Activated T-helper 2 cell treated with anti-CD3 and anti-CD28 coated beads, Interferon-gamma antibody, Interleukin-2, Interleukin-4, amounts not matched to agents 10 μg/mL and 5 μg/mL and 100 μg/mL, durations not matched to agents 14 hours and 24 hours and 36 hours (primary cell): ENCODE measurements at regions of chr6 and their contacts with region 1.

Region 1: GRCh38 chr6:32971581-32972352 is 3.4 kb downstream of the BRD2 start:
- DNase-seq: peak; percentile 99
- H3K4me3 Mint-ChIP-seq: peak overlapping the region; percentile 94
- H3K27ac Mint-ChIP-seq: peak overlapping the region; percentile 98
- H3K4me1 Mint-ChIP-seq: peaks cover 28% of the 10 kb centered on the region
- H3K27me3 Mint-ChIP-seq: no peaks in the 10 kb centered on the region

Region 2: GRCh38 chr6:32195652-32195901 is 776.2 kb before region 1 on chr6:
- intact Hi-C with region 1: loop called (anchors 2 kb)
- DNase-seq: peak; percentile 100
- H3K4me3 Mint-ChIP-seq: peak overlapping the region; percentile 98
- H3K27ac Mint-ChIP-seq: peak overlapping the region; percentile 99
- H3K4me1 Mint-ChIP-seq: peaks cover 33% of the 10 kb centered on the region
- H3K27me3 Mint-ChIP-seq: no peaks in the 10 kb centered on the region

Region 3: DNA sequence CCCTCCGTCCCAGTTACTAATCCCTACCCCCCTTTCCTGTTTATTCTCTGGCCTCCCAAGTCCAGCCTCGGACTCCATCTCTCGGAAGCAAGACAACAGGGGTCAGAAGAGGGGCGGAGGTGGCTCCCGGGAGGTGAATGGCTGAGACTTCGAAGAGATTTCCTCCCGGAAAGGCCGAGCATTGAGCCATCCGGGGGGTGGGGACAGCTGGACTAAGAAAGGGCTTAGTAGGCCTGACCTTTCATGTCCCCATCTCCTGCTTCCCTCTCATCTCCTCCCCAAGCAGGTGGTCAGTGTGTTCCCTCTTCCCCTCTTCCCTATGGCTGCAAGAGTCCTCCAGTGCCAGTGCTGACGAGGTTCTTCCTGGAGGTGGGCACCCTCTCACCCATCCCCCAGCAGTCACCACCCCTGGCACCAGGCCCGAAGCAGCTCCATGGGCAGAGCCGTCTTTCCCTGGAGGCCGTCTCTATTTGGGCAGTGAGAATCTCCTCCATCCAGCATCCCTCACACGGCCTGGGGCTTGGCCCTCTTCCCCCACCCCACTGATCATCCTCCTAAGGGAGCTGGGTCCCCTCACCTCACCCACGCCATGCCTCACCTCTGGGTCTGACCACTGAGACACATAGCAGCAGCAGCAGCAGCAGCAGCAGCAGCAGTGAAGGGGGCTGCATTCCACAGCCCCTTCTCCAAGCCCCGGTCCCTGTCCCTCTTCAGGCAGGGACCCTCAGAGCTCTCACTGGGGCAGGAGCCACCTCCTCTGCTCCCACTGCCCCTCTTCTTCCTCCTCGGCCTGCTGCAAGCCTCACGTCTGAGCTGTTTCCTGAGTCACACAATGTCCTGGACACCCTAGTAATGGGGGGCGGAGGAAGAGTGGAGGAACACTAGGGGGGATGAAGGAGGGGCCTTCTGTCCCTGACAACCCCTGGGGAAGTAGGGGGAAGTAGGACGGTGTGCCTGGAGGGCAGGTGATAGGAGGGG is 748.2 kb before region 1 on chr6 and contains the start of gene NOTCH4:
- intact Hi-C with region 1: no loop called
- DNase-seq: no peak
- H3K4me3 Mint-ChIP-seq: no peak within 1 kb of the TSS
- H3K27ac Mint-ChIP-seq: no peak within 1 kb of the TSS
- H3K4me1 Mint-ChIP-seq: no peaks in the 10 kb centered on the region
- H3K27me3 Mint-ChIP-seq: peaks cover 1% of the 10 kb centered on the region
- total RNA-seq, gene NOTCH4: 0.48 and 0.52 TPM in 2 replicates

Region 4: DNA sequence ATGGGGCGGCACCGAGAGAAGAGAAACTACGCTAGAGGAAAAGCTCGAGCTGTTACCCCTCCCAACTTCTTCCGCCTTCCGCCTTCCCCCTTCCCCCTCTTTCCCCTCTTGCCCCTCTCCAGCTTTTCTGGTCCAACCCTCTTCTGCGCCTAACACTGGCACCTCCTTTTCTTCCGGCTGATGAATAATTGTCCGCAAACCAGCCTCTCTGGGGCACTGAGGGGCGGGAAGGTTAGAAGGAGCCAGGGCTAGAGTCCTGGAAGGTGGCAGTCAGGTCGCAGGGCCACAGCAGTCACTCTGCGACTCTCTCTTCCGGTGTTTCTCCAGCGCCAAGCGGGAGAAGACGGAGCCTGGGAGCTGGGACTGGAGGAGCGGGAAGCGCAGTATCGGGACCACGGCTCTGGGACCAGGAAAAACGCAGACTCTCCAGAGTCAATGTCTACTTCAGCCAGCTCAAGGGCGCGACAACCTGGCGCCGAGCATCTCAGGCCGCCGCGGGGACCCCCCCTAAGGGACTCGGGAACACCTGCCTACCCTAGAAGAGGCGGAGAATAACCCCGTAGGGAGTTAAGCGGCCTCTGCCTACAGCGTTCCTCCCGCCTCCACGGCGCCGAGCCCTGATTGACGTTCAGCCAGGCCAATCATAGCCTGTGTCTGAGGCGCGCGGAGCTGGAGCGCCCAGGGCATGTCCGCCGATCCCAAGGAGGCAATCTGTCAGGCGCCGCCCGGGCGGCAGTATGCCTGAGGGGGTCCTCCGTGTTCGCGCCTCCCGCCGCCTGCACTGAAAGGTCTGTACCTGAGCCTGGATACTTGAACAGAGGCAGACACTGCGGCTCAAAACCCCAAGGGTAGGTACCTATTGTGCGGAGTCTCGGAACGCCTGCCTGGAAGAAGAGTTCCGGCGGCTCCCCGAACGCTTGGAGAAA is 77.4 kb before region 1 on chr6:
- intact Hi-C with region 1: loop called (anchors 2 kb)
- DNase-seq: peak; percentile 95
- H3K4me3 Mint-ChIP-seq: peak overlapping the region; percentile 99
- H3K27ac Mint-ChIP-seq: peak overlapping the region; percentile 95
- H3K4me1 Mint-ChIP-seq: peaks cover 39% of the 10 kb centered on the region
- H3K27me3 Mint-ChIP-seq: no peaks in the 10 kb centered on the region

Region 5: GRCh38 chr6:32922083-32922482 is 49.7 kb before region 1 on chr6:
- intact Hi-C with region 1: no loop called
- DNase-seq: no peak
- H3K4me3 Mint-ChIP-seq: no peak overlapping the region
- H3K27ac Mint-ChIP-seq: no peak overlapping the region
- H3K4me1 Mint-ChIP-seq: no peaks in the 10 kb centered on the region
- H3K27me3 Mint-ChIP-seq: peaks cover 40% of the 10 kb centered on the region

Region 6: DNA sequence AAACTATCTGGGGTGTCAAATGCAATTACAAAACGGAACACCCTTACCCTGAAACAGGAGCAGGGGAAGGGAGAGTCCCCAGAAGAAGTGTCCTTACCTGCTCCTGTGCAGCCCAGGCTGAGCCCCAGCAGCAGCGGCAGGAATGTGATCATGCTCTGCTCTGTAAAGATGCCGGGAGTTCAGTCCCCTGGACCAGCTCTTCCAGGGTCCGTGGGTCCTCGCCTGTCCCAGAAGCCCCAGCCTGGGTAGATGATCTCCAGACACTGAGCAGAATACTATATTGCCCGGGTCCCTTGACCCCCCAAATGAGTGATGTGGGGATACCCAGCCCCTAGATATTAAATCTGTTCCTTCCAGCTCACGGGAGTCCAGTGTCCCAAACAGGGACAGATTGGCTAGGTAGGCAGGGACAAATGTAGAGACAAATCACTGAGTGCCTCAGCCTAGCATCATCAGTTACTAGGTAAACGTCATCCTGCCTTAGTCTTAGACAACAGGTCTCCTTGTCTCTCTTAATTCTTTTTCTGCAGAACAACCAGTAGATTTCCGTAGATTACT is 31.0 kb before region 1 on chr6 and contains the start of gene HLA-DMB:
- intact Hi-C with region 1: loop called (anchors 2 kb)
- DNase-seq: peak; percentile 48
- H3K4me3 Mint-ChIP-seq: peak within 1 kb of the TSS; percentile 77
- H3K27ac Mint-ChIP-seq: peak within 1 kb of the TSS; percentile 91
- H3K4me1 Mint-ChIP-seq: peaks cover 55% of the 10 kb centered on the region
- H3K27me3 Mint-ChIP-seq: no peaks in the 10 kb centered on the region
- total RNA-seq, gene HLA-DMB: 1.3 and 1.4 TPM in 2 replicates

Region 7: DNA sequence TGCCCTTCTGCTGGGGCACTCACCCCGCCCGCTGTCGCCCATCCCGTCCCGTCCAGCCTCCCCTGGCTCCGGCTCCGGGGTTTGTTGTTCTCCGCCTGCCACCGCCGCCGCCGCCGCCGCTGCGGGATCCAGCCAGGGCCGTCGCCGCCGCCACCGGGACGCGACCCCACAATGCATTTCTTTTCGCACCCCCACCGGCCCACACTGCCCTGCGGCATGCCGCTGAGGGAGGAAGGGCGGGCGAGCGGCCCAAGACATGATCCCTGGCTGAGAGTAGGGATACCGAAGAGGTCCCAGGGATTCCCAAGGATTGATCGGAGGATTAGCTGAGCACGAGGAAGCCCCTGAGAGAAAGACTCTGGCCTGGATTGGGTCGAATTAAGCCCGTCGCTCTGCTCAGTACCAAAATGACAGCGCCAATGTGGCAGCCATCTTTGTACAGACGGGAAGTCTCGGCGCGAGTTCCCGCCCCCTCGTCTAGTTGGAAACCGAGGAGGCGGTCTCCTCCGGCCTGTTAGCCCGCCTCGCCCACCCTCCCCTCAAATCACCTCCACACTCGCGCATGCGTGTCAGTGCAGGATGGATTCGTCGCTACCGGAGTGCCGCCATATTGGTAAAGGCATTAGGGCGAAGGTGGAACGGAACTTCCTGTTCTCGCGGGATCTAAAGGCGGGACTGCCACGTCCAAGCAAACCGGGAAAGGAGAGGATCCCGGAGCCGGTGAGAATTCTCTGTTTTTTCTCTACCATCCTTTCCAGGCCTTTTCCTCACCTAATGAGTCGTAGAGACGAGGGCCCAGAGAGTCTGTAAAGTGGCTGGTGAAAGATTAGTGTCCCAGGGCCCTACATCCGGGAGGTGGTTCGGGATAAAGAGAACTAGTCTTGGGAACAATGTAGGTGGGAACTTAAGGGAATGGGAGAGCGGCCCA is 228.7 kb after region 1 on chr6 and contains the starts of genes RXRB and SLC39A7:
- intact Hi-C with region 1: loop called (anchors 2 kb)
- DNase-seq: peak; percentile 97
- H3K4me3 Mint-ChIP-seq: peak within 1 kb of the TSS; percentile 100
- H3K27ac Mint-ChIP-seq: peak within 1 kb of the TSS; percentile 98
- H3K4me1 Mint-ChIP-seq: peaks cover 50% of the 10 kb centered on the region
- H3K27me3 Mint-ChIP-seq: no peaks in the 10 kb centered on the region
- total RNA-seq, gene RXRB: 47.8 and 50.0 TPM in 2 replicates
- total RNA-seq, gene SLC39A7: 63.8 and 69.6 TPM in 2 replicates

Region 8: DNA sequence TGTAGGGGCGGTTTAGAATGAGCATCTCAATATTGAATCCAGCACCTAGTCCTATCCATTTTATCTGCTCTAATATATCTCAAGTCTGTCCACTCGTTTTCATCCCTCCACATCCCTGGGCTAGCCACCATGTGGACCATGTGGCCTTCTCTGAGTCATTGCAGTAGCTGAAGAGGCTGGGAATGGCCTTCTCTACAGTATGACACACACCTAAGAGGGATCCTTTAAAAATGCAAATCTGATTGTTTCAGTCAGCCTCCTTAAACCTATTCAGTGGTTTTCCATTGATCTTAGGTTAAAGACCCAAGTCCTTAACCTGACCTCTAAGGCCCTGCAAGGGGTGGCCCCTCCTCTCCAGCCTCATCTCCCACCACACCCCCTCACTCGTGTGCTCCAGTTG is 245.9 kb after region 1 on chr6:
- intact Hi-C with region 1: no loop called
- DNase-seq: no peak
- H3K4me3 Mint-ChIP-seq: no peak overlapping the region
- H3K27ac Mint-ChIP-seq: no peak overlapping the region
- H3K4me1 Mint-ChIP-seq: peaks cover 13% of the 10 kb centered on the region
- H3K27me3 Mint-ChIP-seq: peaks cover 45% of the 10 kb centered on the region

Region 9: GRCh38 chr6:33317669-33318425 is 346.1 kb after region 1 on chr6 and contains the start of gene ZBTB22:
- intact Hi-C with region 1: loop called (anchors 5 kb)
- DNase-seq: peak; percentile 95
- H3K4me3 Mint-ChIP-seq: peak within 1 kb of the TSS; percentile 99
- H3K27ac Mint-ChIP-seq: peak within 1 kb of the TSS; percentile 97
- H3K4me1 Mint-ChIP-seq: peaks cover 52% of the 10 kb centered on the region
- H3K27me3 Mint-ChIP-seq: no peaks in the 10 kb centered on the region
- total RNA-seq, gene ZBTB22: 10.9 and 14.4 TPM in 2 replicates

Region 10: DNA sequence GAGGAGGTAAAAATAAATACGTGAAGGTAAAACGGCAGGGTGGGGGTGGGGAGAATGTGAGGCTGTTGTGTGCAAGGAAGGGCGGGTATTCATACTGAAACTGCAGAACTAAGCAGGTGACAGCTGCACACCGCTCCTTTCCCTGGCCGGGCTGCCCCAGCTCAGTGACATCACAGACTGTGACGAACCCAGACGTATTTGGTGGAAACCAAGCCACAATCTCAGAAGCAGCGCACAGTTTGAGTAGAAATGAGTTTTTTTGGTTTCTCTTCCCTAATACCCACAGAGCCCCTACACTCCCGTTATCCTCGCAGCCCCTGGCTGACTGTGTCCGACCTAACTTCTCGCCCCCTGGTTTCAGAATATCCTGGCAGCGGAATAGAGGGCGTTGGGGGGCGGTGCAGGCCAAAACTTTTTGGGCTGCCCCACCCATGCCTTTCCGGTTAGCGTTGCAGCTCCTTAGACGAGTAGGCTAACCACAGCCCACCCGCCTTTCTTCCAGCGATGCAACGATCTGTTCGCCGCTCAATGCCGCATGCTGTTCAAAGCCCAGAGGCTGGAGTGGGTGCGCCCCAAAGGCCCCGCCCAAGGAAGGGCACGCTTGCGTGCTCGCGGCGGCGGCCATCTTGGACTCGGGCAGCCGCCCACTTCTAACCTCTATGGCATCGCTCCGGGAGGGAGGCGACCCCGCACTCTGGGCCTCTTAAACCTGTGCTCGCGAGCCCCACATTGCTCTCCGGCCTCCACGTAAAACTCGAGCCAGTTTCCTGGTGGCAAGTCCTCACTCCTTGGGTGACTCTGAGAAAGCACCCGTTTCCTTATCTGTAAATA is 599.3 kb after region 1 on chr6:
- intact Hi-C with region 1: loop called (anchors 5 kb)
- DNase-seq: peak; percentile 94
- H3K4me3 Mint-ChIP-seq: peak overlapping the region; percentile 85
- H3K27ac Mint-ChIP-seq: peak overlapping the region; percentile 99
- H3K4me1 Mint-ChIP-seq: peaks cover 41% of the 10 kb centered on the region
- H3K27me3 Mint-ChIP-seq: no peaks in the 10 kb centered on the region